Ascending aorta (tissue), 2 donors: ENCODE measurements at regions of chr14 and their contacts with region 1.

Region 1: GRCh38 chr14:94026173-94026888 is at the start of gene OTUB2:
- DNase-seq: peak; percentile 97 to 99
- H3K4me3 ChIP-seq: peak within 1 kb of the TSS; percentile 79 to 89
- H3K27ac ChIP-seq: no peak within 1 kb of the TSS
- H3K4me1 ChIP-seq: peaks cover 0 to 3% of the 10 kb centered on the region in 2 donors
- H3K27me3 ChIP-seq: no peaks in the 10 kb centered on the region
- CTCF ChIP-seq: no peak
- total RNA-seq, gene OTUB2: 0.21 TPM

Region 2: GRCh38 chr14:93772263-93772662 is 254.1 kb before region 1 on chr14:
- intact Hi-C with region 1: loop called (anchors 10 kb)
- DNase-seq: peak; percentile 17 to 83
- H3K4me3 ChIP-seq: no peak overlapping the region
- H3K27ac ChIP-seq: peak overlapping the region; percentile 54 to 64
- H3K4me1 ChIP-seq: peaks cover 0 to 3% of the 10 kb centered on the region in 2 donors
- H3K27me3 ChIP-seq: no peaks in the 10 kb centered on the region
- CTCF ChIP-seq: no peak

Region 3: DNA sequence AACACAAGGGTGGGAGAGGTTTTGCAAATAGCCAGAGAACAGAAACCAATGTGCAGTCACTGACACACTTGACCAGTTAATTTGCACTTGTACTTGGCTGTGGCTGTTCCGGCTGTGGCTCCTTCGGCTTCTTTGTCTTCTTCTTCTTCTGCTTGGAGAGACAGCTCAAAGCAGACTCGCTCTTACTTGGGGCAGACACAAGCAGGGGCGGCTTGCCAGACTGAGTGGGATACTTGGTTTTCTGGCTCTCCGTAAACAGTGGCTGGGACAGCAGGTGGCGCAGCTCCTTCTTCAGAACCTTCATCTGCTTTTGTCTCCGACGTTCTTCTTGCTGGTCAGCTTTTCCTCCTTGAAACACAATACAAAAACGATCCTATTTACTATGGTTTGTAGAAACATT is 24.8 kb after region 1 on chr14:
- intact Hi-C with region 1: no loop called
- DNase-seq: peak in 1 of 2 donors; percentile 58
- H3K4me3 ChIP-seq: no peak overlapping the region
- H3K27ac ChIP-seq: no peak overlapping the region
- H3K4me1 ChIP-seq: no peaks in the 10 kb centered on the region
- H3K27me3 ChIP-seq: no peaks in the 10 kb centered on the region
- CTCF ChIP-seq: peak in 2 of 3 experiments; percentile 12 to 29

Region 4: DNA sequence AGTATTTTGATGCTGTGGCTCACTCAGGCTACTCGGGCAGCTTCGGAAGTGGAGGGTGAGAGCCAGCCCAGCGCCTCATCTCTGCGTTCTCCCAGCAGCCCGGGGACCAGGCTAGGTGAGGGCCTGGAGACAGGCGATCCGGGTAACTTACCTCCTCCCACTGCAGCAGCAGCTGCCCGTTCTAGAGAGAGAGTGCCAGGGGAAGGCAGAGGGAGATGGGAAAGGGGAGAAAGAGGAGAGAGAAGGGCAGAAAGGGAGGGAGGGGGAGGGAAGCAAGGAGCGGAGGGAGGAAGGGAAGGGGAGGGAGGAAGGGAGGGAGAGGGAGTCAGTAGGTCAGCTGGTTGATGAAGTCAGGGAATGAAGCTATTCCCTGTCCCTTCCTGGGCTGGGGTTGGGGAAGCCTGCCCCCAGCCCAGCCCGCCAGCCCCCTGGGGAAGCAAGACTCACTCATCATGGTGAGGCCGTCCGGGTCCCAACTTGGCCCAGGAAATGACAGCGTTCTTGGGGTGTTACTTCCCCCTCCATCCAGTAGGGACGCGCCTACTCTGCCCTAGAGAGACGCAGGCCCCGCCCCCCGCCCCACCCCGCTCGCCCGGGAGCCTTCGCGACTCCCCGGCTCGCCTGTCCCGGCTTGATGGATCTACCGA is 102.9 kb after region 1 on chr14 and contains the start of gene IFI27L2:
- intact Hi-C with region 1: loop called (anchors 2 kb)
- DNase-seq: peak; percentile 57 to 87
- H3K4me3 ChIP-seq: peak within 1 kb of the TSS; percentile 67 to 70
- H3K27ac ChIP-seq: peak within 1 kb of the TSS; percentile 74 to 88
- H3K4me1 ChIP-seq: peaks cover 0 to 5% of the 10 kb centered on the region in 2 donors
- H3K27me3 ChIP-seq: no peaks in the 10 kb centered on the region
- CTCF ChIP-seq: peak in 2 of 3 experiments; percentile 31 to 39
- total RNA-seq, gene IFI27L2: 36.0 TPM

Region 5: GRCh38 chr14:94173885-94174603 is 147.7 kb after region 1 on chr14 and contains the start of gene PPP4R4:
- intact Hi-C with region 1: loop called (anchors 5 kb)
- DNase-seq: peak; percentile 63 to 92
- H3K4me3 ChIP-seq: peak within 1 kb of the TSS; percentile 75 to 84
- H3K27ac ChIP-seq: peak within 1 kb of the TSS; percentile 50 to 61
- H3K4me1 ChIP-seq: peaks cover 3 to 14% of the 10 kb centered on the region in 2 donors
- H3K27me3 ChIP-seq: no peaks in the 10 kb centered on the region
- CTCF ChIP-seq: no peak
- total RNA-seq, gene PPP4R4: not detected